Heart right ventricle (tissue), 16 donors: ENCODE measurements at regions of chr3 and their contacts with region 1.

Region 1: DNA sequence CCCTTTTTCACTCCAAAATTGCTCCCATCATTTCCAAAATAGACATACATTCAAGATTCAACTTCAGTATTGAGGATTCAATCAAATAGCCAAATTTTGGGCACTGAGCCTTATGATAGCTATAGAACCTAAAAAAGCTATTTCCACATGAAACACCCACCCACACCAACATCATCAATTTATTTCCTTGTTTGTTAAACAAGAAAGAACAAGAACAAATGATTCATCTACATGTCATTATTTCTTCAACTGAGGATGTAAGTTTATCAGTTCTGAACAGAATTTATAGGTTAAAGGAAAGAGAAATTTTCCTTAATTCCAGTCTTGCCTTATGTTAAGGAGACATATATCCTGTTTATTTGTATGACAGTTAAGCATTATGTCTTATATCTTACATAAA is 32.2 kb downstream of the DPPA2 start:
- DNase-seq: no peak
- ATAC-seq: no peak
- H3K4me3 ChIP-seq: no peak overlapping the region
- H3K27ac ChIP-seq: no peak overlapping the region
- H3K4me1 ChIP-seq: no peaks in the 10 kb centered on the region
- H3K27me3 ChIP-seq: no peaks in the 10 kb centered on the region
- CTCF ChIP-seq: no peak

Region 2: GRCh38 chr3:109396806-109397205 is 112.7 kb after region 1 on chr3:
- intact Hi-C with region 1: loop called in 1 of 10 experiments (anchors 10 kb)
- DNase-seq: no peak
- ATAC-seq: no peak
- H3K4me3 ChIP-seq: no peak overlapping the region
- H3K27ac ChIP-seq: no peak overlapping the region
- H3K4me1 ChIP-seq: no peaks in the 10 kb centered on the region
- H3K27me3 ChIP-seq: no peaks in the 10 kb centered on the region
- CTCF ChIP-seq: no peak